Aorta (tissue), 5 donors: ENCODE measurements at regions of chr6 and their contacts with region 1.

Region 1: GRCh38 chr6:35342258-35343091 is at the start of gene PPARD:
- DNase-seq: peak; percentile 98 to 100
- ATAC-seq: peak; percentile 100
- H3K4me3 ChIP-seq: peak within 1 kb of the TSS; percentile 76 to 85
- H3K27ac ChIP-seq: peak within 1 kb of the TSS in 1 of 2 donors; percentile 46
- H3K4me1 ChIP-seq: peaks cover 4% of the 10 kb centered on the region in 2 donors
- H3K27me3 ChIP-seq: no peaks in the 10 kb centered on the region
- total RNA-seq, gene PPARD: 24.9 to 27.7 TPM

Region 2: DNA sequence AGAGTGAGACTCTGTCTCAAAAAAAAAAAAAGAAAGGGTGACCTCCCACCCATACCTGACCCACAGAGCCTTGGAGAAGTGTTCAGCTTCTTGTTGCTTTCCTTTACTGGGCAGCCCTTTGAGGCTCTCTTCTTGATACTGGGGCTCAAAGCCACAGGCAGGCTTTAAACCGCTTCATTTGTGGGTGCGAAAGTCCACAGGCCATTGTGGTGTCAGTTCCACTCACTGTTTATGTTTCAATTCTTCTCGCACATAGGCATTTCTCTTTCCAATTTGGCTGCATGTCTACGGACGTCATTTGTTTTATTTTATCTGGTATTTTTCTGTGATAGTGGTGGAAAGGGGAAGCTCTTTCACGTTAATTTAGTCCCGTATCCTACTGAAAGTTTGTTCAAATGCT is 34.5 kb after region 1 on chr6:
- intact Hi-C with region 1: loop called in 1 of 2 experiments (anchors 2 kb)
- DNase-seq: no peak
- ATAC-seq: no peak
- H3K4me3 ChIP-seq: no peak overlapping the region
- H3K27ac ChIP-seq: peak overlapping the region in 1 of 2 donors; percentile 88
- H3K4me1 ChIP-seq: peaks cover 4 to 17% of the 10 kb centered on the region in 2 donors
- H3K27me3 ChIP-seq: no peaks in the 10 kb centered on the region

Region 3: GRCh38 chr6:35415065-35415991 is 72.9 kb after region 1 on chr6:
- intact Hi-C with region 1: loop called (anchors 2 kb)
- DNase-seq: peak; percentile 76 to 81
- ATAC-seq: peak; percentile 76
- H3K4me3 ChIP-seq: no peak overlapping the region
- H3K27ac ChIP-seq: no peak overlapping the region
- H3K4me1 ChIP-seq: no peaks in the 10 kb centered on the region
- H3K27me3 ChIP-seq: no peaks in the 10 kb centered on the region

Region 4: DNA sequence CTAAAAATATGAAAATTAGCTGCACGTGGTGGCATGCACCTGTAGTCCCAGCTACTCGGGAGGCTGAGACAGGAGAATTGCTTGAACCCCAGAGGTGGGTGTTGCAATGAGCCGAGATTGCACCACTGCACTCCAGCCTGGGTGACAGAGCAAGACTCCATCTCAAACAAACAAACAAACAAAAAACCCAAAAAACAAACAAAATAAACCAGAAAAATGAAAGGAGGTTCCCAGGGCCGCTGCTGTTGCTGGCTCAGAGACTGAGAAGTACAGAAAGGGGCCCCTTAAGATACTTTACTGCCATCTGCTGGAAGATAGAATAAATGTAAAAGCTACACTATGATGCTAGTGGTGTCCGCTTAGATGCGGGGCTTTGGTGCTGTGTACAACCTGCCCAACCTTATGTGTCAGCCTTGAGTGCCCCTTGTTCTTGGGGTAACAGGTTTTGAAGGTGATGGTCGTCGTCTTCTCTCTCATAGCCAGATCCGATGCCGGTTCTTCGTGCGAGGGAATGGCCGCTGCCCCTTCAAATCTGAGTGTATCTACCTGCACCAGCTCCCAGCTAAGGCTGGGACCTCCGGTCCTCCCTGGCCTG is 106.9 kb after region 1 on chr6:
- intact Hi-C with region 1: loop called (anchors 1 to 2 kb)
- DNase-seq: no peak
- ATAC-seq: peak; percentile 71
- H3K4me3 ChIP-seq: no peak overlapping the region
- H3K27ac ChIP-seq: no peak overlapping the region
- H3K4me1 ChIP-seq: no peaks in the 10 kb centered on the region
- H3K27me3 ChIP-seq: no peaks in the 10 kb centered on the region

Region 5: GRCh38 chr6:35468181-35468979 is 125.9 kb after region 1 on chr6 and contains the start of gene RPL10A:
- intact Hi-C with region 1: loop called in 1 of 2 experiments (anchors 1 kb)
- DNase-seq: peak; percentile 97
- ATAC-seq: peak; percentile 97
- H3K4me3 ChIP-seq: peak within 1 kb of the TSS; percentile 60
- H3K27ac ChIP-seq: peak within 1 kb of the TSS in 1 of 2 donors; percentile 76
- H3K4me1 ChIP-seq: no peaks in the 10 kb centered on the region
- H3K27me3 ChIP-seq: no peaks in the 10 kb centered on the region
- total RNA-seq, gene RPL10A: 834 to 875 TPM